ENCODE measurements at regions of chr4 and their contacts with region 1.

Region 1: GRCh38 chr4:139015269-139015947 is at the start of gene NOCT:
- DNase-seq: peak; percentile 98
- ATAC-seq: peak; percentile 92
- H3K4me3 Mint-ChIP-seq: peak within 1 kb of the TSS; percentile 90
- H3K27ac Mint-ChIP-seq: peak within 1 kb of the TSS; percentile 96
- H3K4me1 Mint-ChIP-seq: peaks cover 41% of the 10 kb centered on the region
- H3K27me3 Mint-ChIP-seq: no peaks in the 10 kb centered on the region
- total RNA-seq, gene NOCT: 16.5 to 20.5 TPM

Region 2: DNA sequence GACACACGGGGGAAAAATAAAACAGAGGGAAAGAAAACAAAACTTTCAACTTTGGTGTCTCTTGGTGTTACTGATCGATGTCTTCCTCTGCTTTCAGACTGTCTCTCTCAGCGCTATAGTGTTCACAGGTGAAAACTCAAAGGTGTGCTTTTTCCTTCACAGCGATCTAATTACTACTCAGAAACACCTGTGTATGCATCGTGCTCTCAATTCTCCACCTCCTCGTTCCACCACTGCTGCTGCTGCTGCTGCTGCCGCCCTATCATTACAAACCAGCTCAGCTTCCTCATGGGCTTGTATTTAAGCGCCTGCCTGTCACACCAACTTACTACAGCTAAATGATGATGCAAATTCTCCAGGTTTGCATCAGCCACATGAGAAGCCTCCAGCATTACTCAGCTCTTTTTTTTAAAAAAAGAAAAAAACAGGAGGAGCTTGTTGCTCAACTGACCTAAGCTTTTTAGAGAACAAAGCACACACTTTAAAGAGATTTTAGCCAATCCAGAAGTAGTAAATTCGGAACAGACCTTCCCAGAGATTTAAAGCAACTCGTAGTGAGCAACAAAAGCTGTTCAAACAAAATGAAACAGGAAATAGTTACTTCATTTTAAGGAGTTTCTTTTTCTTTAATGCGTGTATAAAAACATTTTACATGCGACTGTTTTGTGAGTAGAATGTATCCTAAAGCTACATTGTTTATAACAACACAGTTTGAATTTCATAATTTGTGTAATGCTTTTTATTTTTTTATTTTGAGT is 773.2 kb before region 1 on chr4 and contains the start of gene SLC7A11:
- CTCF ChIA-PET with region 1: no interaction called
- POLR2A ChIA-PET with region 1: no interaction called
- intact Hi-C with region 1: loop called in 1 of 2 experiments (anchors 5 kb)
- DNase-seq: peak; percentile 75
- ATAC-seq: peak; percentile 95
- H3K4me3 Mint-ChIP-seq: peak within 1 kb of the TSS; percentile 78
- H3K27ac Mint-ChIP-seq: peak within 1 kb of the TSS; percentile 88
- H3K4me1 Mint-ChIP-seq: peaks cover 7% of the 10 kb centered on the region
- H3K27me3 Mint-ChIP-seq: no peaks in the 10 kb centered on the region
- total RNA-seq, gene SLC7A11: 4.4 to 4.9 TPM

Region 3: GRCh38 chr4:138555584-138555983 is 459.8 kb before region 1 on chr4:
- CTCF ChIA-PET with region 1: no interaction called
- POLR2A ChIA-PET with region 1: no interaction called
- intact Hi-C with region 1: no loop called
- DNase-seq: no peak
- ATAC-seq: no peak
- H3K4me3 Mint-ChIP-seq: no peak overlapping the region
- H3K27ac Mint-ChIP-seq: no peak overlapping the region
- H3K4me1 Mint-ChIP-seq: no peaks in the 10 kb centered on the region
- H3K27me3 Mint-ChIP-seq: no peaks in the 10 kb centered on the region

Region 4: DNA sequence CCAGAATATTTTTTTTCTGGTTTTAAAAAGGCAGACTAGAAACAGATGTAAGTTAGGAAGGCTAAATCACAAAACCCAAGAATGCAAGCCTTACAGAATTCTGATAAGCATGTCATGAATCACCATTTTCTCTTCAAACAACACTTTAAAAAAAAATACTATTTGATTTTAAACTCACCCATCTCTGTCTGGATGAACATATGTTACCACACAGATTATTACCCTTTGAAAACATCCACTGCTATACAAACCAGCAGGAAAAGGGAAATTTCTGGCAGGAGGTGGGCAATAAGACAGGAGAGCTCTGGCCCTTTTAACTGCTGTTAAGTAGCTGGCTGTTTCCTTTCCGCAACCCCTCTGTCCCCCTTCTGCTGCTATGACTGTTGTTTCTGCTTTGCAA is 317.6 kb before region 1 on chr4:
- CTCF ChIA-PET with region 1: no interaction called
- POLR2A ChIA-PET with region 1: no interaction called
- intact Hi-C with region 1: no loop called
- DNase-seq: no peak
- ATAC-seq: no peak
- H3K4me3 Mint-ChIP-seq: no peak overlapping the region
- H3K27ac Mint-ChIP-seq: no peak overlapping the region
- H3K4me1 Mint-ChIP-seq: no peaks in the 10 kb centered on the region
- H3K27me3 Mint-ChIP-seq: peaks cover 14% of the 10 kb centered on the region

Region 5: DNA sequence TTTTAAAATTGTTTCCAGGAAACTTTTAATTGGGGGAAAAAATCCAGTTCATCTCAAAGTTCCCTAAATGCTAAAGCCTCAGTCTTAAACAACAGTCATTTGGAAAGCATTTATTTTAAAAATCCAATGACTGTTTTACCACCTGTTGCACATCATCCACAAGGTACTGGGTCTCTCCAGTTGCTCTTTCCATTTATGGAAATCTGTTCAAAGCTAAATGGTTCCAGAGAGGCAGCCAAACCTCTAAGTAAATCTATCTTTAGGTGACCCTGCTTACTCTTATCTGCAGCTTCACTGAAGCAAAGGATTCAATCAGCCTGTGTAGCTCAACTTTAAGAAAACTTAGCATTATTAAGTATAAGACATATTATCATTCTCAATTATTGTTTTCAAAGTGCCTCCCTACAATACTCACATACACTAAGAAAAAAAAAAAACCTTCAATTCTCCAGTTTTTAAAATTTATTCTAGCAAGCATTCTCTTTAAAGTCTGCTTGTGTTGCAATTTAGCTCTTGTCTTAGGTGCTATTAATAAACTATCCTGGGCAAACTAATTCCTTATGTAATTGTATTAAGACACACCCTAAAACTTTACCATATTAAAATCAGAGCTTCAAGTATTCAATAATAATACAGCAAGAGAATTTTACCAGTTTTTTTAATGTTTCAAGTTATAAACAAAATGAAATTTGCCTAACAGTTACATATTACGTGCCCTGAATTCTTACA is 60.8 kb after region 1 on chr4:
- CTCF ChIA-PET with region 1: no interaction called
- POLR2A ChIA-PET with region 1: no interaction called
- intact Hi-C with region 1: no loop called
- DNase-seq: no peak
- ATAC-seq: no peak
- H3K4me3 Mint-ChIP-seq: no peak overlapping the region
- H3K27ac Mint-ChIP-seq: no peak overlapping the region
- H3K4me1 Mint-ChIP-seq: peaks cover 36% of the 10 kb centered on the region
- H3K27me3 Mint-ChIP-seq: no peaks in the 10 kb centered on the region

Region 6: DNA sequence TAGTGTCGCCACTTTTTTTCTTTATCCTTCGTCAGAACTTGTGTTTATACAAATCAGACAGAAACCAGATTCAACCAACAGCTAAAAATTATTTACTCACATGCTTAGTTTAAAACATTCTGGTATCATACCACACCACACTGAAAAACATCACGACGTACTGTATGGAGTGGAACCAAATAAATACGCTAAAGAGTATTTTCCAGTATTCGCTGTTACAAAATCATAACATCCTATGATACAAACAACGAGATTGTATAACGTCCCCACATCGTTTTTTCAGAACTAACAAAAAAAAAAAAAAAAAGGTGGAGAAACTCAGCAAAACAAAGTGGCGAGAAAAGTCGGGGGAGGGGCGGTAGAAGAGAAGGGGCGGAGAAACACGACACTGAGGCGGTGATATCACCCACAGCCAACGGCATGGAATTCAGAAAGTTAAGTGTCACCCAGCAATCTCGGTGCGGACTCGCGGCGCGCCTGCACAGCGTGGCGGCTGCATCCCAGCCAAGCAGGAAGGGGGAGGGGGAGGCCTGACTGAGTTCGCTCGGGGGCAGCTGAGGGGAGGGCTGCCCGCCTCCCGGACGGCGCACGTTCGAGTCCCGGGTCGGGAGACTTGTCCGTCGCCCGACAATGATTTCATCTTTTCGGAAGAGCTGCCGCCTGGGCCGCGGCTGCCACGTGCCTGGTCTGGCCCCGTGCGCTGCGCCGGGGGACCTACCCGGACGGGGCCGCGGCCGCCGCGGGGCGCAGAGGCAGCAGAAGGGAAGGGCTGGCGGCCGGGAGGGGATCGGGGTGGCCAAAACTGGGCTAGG is 539.7 kb after region 1 on chr4:
- CTCF ChIA-PET with region 1: no interaction called
- POLR2A ChIA-PET with region 1: no interaction called
- intact Hi-C with region 1: loop called (anchors 1 to 10 kb)
- DNase-seq: peak; percentile 91
- ATAC-seq: peak; percentile 76
- H3K4me3 Mint-ChIP-seq: peak overlapping the region; percentile 96
- H3K27ac Mint-ChIP-seq: peak overlapping the region; percentile 91
- H3K4me1 Mint-ChIP-seq: peaks cover 45% of the 10 kb centered on the region
- H3K27me3 Mint-ChIP-seq: no peaks in the 10 kb centered on the region